Caco-2 (cell line): ENCODE measurements at regions of chr19 and their contacts with region 1.

Region 1: GRCh38 chr19:10269333-10270179 is 1.4 kb upstream of the ICAM1 start:
- DNase-seq: peak; percentile 82 to 92
- H3K4me3 ChIP-seq: peak overlapping the region; percentile 61
- H3K4me3 Mint-ChIP-seq: peak overlapping the region; percentile 70
- H3K27ac Mint-ChIP-seq: peak overlapping the region; percentile 48
- H3K4me1 ChIP-seq: peaks cover 13% of the 10 kb centered on the region; the same call in 1 of the 2 replicates
- H3K4me1 Mint-ChIP-seq: peaks cover 6% of the 10 kb centered on the region
- H3K27me3 ChIP-seq: no peaks in the 10 kb centered on the region
- H3K27me3 Mint-ChIP-seq: no peaks in the 10 kb centered on the region
- CTCF ChIP-seq: peak; percentile 87 to 89

Region 2: DNA sequence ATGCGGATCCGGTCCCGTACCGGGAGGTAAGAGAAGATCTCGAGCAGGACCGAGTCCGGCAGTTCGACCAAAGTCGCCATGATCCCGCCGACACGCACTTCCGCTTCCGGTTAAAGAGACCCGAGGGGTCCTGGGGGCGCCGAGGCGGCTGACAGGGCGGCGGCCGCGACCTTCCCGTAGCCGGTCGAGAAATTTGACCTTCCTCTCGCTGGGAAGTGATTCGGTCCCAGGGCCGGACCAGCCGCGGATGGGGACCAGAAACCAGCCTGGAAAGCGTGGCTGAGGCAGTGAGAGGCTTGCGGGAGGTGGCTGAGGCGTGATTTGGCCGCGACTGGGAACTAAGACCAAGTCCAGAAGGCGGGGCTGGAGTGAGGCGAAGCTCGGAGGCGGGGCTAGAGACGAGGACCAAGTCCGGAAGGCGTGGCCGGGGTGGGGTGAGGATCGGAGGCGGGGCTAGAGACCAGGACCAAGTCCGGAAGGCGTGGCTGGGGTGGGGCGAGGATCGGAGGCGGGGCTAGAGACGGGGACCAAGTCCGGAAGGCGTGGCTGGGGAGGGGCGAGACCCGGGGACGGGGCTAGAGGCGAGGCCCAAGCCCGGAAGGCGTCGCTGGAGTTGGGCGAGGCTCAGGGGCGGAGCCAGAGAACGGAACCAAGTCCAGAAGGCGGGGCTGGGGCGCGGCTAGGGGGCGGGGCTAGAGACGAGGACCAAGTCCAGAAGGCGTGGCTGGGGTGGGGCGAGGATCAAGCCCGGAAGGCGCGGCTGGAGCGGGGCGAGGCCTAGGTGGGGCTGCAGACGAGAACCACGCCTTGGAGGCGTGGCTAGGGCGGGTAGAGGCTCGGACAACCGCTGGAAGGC is 450.6 kb before region 1 on chr19 and contains the start of gene FBXL12:
- CTCF ChIA-PET with region 1: no interaction called
- POLR2A ChIA-PET with region 1: interaction called, 11 read pairs
- intact Hi-C with region 1: no loop called
- DNase-seq: peak; percentile 99 to 100
- H3K4me3 ChIP-seq: peak within 1 kb of the TSS; percentile 73
- H3K4me3 Mint-ChIP-seq: peak within 1 kb of the TSS; percentile 90
- H3K27ac Mint-ChIP-seq: peak within 1 kb of the TSS; percentile 92
- H3K4me1 ChIP-seq: peaks cover 5% of the 10 kb centered on the region
- H3K4me1 Mint-ChIP-seq: peaks cover 5% of the 10 kb centered on the region
- H3K27me3 ChIP-seq: no peaks in the 10 kb centered on the region
- H3K27me3 Mint-ChIP-seq: no peaks in the 10 kb centered on the region
- CTCF ChIP-seq: no peak
- total RNA-seq, gene FBXL12: 37.6 and 39.9 TPM in 2 replicates

Region 3: GRCh38 chr19:10259162-10259905 is 10.2 kb before region 1 on chr19:
- CTCF ChIA-PET with region 1: interaction called, 28 read pairs
- POLR2A ChIA-PET with region 1: interaction called, 9 read pairs
- intact Hi-C with region 1: no loop called
- DNase-seq: peak; percentile 92 to 94
- H3K4me3 ChIP-seq: no peak overlapping the region
- H3K4me3 Mint-ChIP-seq: no peak overlapping the region
- H3K27ac Mint-ChIP-seq: no peak overlapping the region
- H3K4me1 ChIP-seq: peaks cover 27% of the 10 kb centered on the region
- H3K4me1 Mint-ChIP-seq: peaks cover 7% of the 10 kb centered on the region
- H3K27me3 ChIP-seq: no peaks in the 10 kb centered on the region
- H3K27me3 Mint-ChIP-seq: no peaks in the 10 kb centered on the region
- CTCF ChIP-seq: peak; percentile 66 to 75

Region 4: GRCh38 chr19:10289167-10289835 is 19.7 kb after region 1 on chr19:
- CTCF ChIA-PET with region 1: interaction called, 34 read pairs
- POLR2A ChIA-PET with region 1: interaction called, 22 read pairs
- intact Hi-C with region 1: loop called (anchors 2 kb)
- DNase-seq: peak; percentile 61 to 78
- H3K4me3 ChIP-seq: peak overlapping the region; percentile 48
- H3K4me3 Mint-ChIP-seq: peak overlapping the region; percentile 87
- H3K27ac Mint-ChIP-seq: peak overlapping the region; percentile 77
- H3K4me1 ChIP-seq: peaks cover 33% of the 10 kb centered on the region
- H3K4me1 Mint-ChIP-seq: peaks cover 24% of the 10 kb centered on the region
- H3K27me3 ChIP-seq: no peaks in the 10 kb centered on the region
- H3K27me3 Mint-ChIP-seq: peaks cover 7% of the 10 kb centered on the region
- CTCF ChIP-seq: no peak

Region 5: GRCh38 chr19:10315335-10316214 is 46.0 kb after region 1 on chr19 and contains the start of gene FDX2:
- CTCF ChIA-PET with region 1: no interaction called
- POLR2A ChIA-PET with region 1: no interaction called
- intact Hi-C with region 1: no loop called
- DNase-seq: peak; percentile 92
- H3K4me3 ChIP-seq: peak within 1 kb of the TSS; percentile 86
- H3K4me3 Mint-ChIP-seq: peak within 1 kb of the TSS; percentile 99
- H3K27ac Mint-ChIP-seq: peak within 1 kb of the TSS; percentile 91
- H3K4me1 ChIP-seq: peaks cover 12% of the 10 kb centered on the region; the same call in 1 of the 2 replicates
- H3K4me1 Mint-ChIP-seq: peaks cover 17% of the 10 kb centered on the region
- H3K27me3 ChIP-seq: no peaks in the 10 kb centered on the region
- H3K27me3 Mint-ChIP-seq: no peaks in the 10 kb centered on the region
- CTCF ChIP-seq: no peak
- total RNA-seq, gene FDX2: 28.7 and 30.3 TPM in 2 replicates

Region 6: GRCh38 chr19:10332955-10333757 is 63.6 kb after region 1 on chr19 and contains the start of gene RAVER1:
- CTCF ChIA-PET with region 1: interaction called, 26 read pairs
- POLR2A ChIA-PET with region 1: interaction called, 7 read pairs
- intact Hi-C with region 1: loop called (anchors 2 kb)
- DNase-seq: peak; percentile 96
- H3K4me3 ChIP-seq: peak within 1 kb of the TSS; percentile 79
- H3K4me3 Mint-ChIP-seq: peak within 1 kb of the TSS; percentile 85
- H3K27ac Mint-ChIP-seq: peak within 1 kb of the TSS; percentile 81
- H3K4me1 ChIP-seq: peaks cover 6% of the 10 kb centered on the region; the same call in 1 of the 2 replicates
- H3K4me1 Mint-ChIP-seq: peaks cover 5% of the 10 kb centered on the region
- H3K27me3 ChIP-seq: no peaks in the 10 kb centered on the region
- H3K27me3 Mint-ChIP-seq: no peaks in the 10 kb centered on the region
- CTCF ChIP-seq: no peak
- total RNA-seq, gene RAVER1: 53.9 and 55.1 TPM in 2 replicates

Region 7: GRCh38 chr19:10380313-10381102 is 111.0 kb after region 1 on chr19 and contains the start of gene TYK2:
- CTCF ChIA-PET with region 1: interaction called, 9 read pairs
- POLR2A ChIA-PET with region 1: interaction called, 10 read pairs
- intact Hi-C with region 1: loop called (anchors 2 kb)
- DNase-seq: peak; percentile 97 to 98
- H3K4me3 ChIP-seq: peak within 1 kb of the TSS; percentile 96
- H3K4me3 Mint-ChIP-seq: peak within 1 kb of the TSS; percentile 85
- H3K27ac Mint-ChIP-seq: peak within 1 kb of the TSS; percentile 95
- H3K4me1 ChIP-seq: peaks cover 8% of the 10 kb centered on the region
- H3K4me1 Mint-ChIP-seq: peaks cover 8% of the 10 kb centered on the region
- H3K27me3 ChIP-seq: no peaks in the 10 kb centered on the region
- H3K27me3 Mint-ChIP-seq: no peaks in the 10 kb centered on the region
- CTCF ChIP-seq: no peak
- total RNA-seq, gene TYK2: 124 and 134 TPM in 2 replicates

Region 8: GRCh38 chr19:10388957-10389356 is 119.4 kb after region 1 on chr19:
- CTCF ChIA-PET with region 1: interaction called, 73 read pairs
- POLR2A ChIA-PET with region 1: interaction called, 4 read pairs
- intact Hi-C with region 1: loop called (anchors 1 kb)
- DNase-seq: peak; percentile 82 to 87
- H3K4me3 ChIP-seq: no peak overlapping the region
- H3K4me3 Mint-ChIP-seq: no peak overlapping the region
- H3K27ac Mint-ChIP-seq: peak overlapping the region; percentile 49
- H3K4me1 ChIP-seq: no peaks in the 10 kb centered on the region
- H3K4me1 Mint-ChIP-seq: no peaks in the 10 kb centered on the region
- H3K27me3 ChIP-seq: no peaks in the 10 kb centered on the region
- H3K27me3 Mint-ChIP-seq: no peaks in the 10 kb centered on the region
- CTCF ChIP-seq: peak; percentile 87 to 90